Sciatic nerve (tissue), 2 donors: ENCODE measurements at regions of chr12 and their contacts with region 1.

Region 1: DNA sequence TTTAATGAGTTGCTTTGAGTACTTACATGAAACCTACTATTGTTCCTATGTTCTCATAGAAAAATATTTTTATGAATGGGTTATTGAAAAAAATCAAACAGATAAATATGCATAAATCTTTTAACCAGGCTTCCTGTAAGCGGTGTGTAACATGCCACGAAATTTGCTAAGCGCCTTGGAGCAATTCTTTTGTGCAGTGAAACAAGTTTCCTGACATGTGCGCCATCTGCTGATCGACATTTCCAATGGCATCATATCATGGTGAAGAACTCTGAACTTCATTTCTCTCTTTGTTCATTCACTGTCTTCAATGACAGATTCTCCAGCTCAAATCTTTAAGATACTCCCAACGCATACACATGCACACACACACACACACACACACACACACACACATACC is 145.6 kb upstream of the NAV3 start:
- DNase-seq: peak; percentile 82
- ATAC-seq: peak; percentile 86

Region 2: DNA sequence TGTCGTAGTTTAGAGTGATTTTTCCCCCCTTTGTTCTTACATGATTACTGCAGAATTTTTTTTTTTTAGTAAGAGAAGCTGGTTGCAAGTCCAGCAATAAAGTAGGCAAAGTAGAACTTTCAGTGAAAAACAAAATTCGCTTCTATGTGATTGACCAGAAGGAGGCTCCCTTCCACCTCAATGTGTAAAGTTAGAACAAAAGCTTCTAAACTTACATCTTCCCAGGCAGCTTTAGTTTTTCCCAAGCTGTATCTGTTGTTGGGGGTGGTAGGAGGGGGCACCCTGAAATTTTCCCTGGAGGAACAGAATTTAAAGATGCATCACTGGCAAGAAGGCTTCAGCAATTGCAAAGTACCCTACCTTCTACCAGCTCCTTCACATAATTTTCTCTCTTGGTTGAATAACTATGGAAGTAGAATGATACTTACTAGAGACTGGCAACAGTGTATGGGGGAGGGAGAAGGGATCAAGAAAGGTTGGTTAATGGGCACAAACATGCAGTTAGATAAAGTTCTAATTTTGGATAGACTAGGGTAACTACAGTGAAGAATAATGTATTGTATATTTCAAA is 532.4 kb before region 1 on chr12:
- intact Hi-C with region 1: loop called (anchors 10 kb)
- DNase-seq: no peak
- ATAC-seq: peak; percentile 52